A673 (cell line): ENCODE measurements at regions of chr6 and their contacts with region 1.

Region 1: GRCh38 chr6:25490018-25490801 is 161.8 kb upstream of the SCGN start:
- DNase-seq: peak; percentile 89
- H3K4me3 ChIP-seq: no peak overlapping the region
- H3K27ac ChIP-seq: no peak overlapping the region
- H3K4me1 ChIP-seq: peaks cover 15% of the 10 kb centered on the region
- H3K27me3 ChIP-seq: no peaks in the 10 kb centered on the region
- CTCF ChIP-seq: peak; percentile 90

Region 2: DNA sequence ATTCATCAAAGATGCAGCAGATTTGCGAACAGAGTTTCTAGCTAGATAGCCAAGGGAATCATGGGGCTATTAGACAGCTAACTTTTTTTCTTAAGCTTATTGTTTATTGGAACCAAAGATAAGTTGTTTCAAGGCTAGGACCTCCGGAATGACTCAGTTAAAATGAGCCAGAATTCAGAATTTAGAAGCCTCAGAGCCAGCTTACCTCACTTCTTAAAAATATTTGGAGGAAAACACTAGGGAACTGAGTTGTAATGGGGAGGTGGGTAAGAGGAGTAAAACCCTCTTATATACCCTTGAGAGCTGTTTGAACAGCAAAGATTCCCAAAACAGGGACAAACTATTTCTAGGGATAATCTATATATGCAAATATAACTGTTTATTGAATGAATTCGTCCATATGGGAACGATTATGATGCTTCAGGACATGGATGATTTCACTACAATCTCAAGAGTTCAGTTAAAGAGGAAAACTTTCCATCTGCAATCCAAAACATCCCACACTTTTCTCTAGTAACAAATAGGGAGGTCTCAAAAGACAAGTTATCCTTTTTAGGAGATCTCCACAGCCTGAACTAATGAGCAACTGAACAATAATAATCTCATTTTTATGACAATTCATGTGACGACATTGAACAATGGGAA is 223.6 kb before region 1 on chr6:
- CTCF ChIA-PET with region 1: interaction called, 41 read pairs
- POLR2A ChIA-PET with region 1: no interaction called
- intact Hi-C with region 1: no loop called
- DNase-seq: no peak
- H3K4me3 ChIP-seq: no peak overlapping the region
- H3K27ac ChIP-seq: no peak overlapping the region
- H3K4me1 ChIP-seq: peaks cover 13% of the 10 kb centered on the region
- H3K27me3 ChIP-seq: no peaks in the 10 kb centered on the region
- CTCF ChIP-seq: no peak

Region 3: DNA sequence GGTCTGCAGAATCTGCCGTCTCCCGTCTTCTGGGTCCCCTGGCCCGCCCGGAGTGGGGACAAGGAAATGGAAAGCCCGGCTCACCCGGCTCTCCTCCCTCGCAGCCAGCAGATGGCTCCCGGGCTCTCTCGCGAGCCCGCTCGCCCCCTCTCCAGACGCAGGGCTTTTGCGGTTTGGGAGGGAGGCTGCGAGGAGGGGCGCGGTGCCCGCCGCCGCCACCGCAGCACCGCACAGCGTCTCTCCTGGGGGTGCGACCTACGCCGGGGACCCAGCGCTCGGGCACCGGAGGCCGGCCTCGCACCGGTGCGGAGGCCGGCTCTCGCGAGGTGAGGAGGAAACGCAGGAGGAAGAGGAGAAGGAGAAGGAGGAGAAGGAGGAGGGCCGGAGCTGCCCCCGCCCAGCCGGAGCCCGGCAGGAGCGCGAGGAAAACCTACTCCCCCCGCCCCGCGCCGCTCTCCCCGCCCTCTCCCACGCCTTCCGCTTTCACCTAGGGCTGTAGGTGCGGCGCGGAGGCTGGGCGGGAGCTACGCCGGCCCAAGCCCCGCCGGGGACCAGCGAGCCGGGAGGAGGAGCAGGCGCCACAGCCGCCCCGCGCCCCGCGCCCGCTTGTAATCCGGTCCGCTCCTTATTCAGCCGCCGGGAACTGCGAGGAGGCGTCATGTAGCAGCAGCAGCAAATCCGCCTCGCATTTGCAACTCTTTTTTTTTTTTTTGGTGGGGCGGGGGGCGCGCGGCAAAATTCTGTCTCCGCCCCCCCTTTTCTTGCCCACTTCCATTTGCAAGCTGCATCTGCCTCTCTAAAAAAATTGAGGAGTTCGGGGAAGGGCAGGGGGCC is 211.1 kb before region 1 on chr6 and contains the start of gene CARMIL1:
- CTCF ChIA-PET with region 1: interaction called, 40 read pairs
- POLR2A ChIA-PET with region 1: no interaction called
- intact Hi-C with region 1: loop called (anchors 1 kb)
- DNase-seq: peak; percentile 91
- H3K4me3 ChIP-seq: peak within 1 kb of the TSS; percentile 85
- H3K27ac ChIP-seq: peak within 1 kb of the TSS; percentile 75
- H3K4me1 ChIP-seq: peaks cover 16% of the 10 kb centered on the region
- H3K27me3 ChIP-seq: no peaks in the 10 kb centered on the region
- CTCF ChIP-seq: peak; percentile 80
- total RNA-seq, gene CARMIL1: 7.2 and 7.9 TPM in 2 replicates

Region 4: DNA sequence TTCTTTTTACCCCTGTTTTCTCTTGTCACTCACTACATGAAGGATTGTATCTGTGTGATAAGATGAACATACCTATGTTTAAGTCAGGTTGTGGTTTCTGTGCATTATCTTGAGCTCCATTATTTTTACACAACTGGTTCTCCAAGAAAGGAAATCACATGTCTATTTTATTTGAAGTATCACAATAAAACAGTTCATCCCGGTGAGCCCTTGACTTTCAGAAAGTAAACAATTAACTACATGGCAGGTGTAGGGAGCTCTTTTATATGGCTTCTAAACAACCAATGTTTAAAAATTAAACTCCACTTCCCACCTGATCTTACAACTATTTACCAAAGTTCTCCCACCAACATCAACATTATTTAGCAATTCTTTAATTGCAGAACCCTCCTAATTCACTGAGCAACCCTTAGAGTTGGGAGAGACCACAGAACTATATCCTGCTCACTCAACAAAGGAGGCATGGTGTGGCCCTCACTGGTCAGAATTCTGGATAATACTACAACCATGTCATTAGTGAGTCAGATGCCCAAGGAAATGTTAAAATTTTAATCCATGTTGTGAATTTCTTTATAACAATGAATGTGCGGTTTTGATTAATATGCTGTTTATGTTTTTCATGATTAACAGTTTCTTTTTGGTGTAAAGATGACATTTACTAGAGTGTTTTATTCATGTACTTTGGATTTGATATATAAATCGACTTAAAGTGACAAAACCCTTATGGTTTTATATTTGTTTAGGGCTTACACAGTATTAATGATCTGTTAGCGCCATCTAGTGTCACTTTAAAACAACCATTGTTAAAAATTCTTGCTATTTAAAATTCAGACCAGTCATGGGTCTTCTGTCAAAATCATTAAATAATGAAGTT is 111.8 kb after region 1 on chr6:
- CTCF ChIA-PET with region 1: no interaction called
- POLR2A ChIA-PET with region 1: no interaction called
- intact Hi-C with region 1: loop called (anchors 5 kb)
- DNase-seq: peak; percentile 66
- H3K4me3 ChIP-seq: no peak overlapping the region
- H3K27ac ChIP-seq: no peak overlapping the region
- H3K4me1 ChIP-seq: no peaks in the 10 kb centered on the region
- H3K27me3 ChIP-seq: no peaks in the 10 kb centered on the region
- CTCF ChIP-seq: peak; percentile 64